ENCODE measurements at regions of chr3 and their contacts with region 1.

Region 1: GRCh38 chr3:186534113-186534669 is 10.0 kb downstream of the CRYGS start:
- DNase-seq: peak; percentile 76
- H3K4me3 Mint-ChIP-seq: peak overlapping the region; percentile 61
- H3K27ac Mint-ChIP-seq: peak overlapping the region; percentile 97
- H3K4me1 Mint-ChIP-seq: peaks cover 94% of the 10 kb centered on the region
- H3K27me3 Mint-ChIP-seq: no peaks in the 10 kb centered on the region

Region 2: DNA sequence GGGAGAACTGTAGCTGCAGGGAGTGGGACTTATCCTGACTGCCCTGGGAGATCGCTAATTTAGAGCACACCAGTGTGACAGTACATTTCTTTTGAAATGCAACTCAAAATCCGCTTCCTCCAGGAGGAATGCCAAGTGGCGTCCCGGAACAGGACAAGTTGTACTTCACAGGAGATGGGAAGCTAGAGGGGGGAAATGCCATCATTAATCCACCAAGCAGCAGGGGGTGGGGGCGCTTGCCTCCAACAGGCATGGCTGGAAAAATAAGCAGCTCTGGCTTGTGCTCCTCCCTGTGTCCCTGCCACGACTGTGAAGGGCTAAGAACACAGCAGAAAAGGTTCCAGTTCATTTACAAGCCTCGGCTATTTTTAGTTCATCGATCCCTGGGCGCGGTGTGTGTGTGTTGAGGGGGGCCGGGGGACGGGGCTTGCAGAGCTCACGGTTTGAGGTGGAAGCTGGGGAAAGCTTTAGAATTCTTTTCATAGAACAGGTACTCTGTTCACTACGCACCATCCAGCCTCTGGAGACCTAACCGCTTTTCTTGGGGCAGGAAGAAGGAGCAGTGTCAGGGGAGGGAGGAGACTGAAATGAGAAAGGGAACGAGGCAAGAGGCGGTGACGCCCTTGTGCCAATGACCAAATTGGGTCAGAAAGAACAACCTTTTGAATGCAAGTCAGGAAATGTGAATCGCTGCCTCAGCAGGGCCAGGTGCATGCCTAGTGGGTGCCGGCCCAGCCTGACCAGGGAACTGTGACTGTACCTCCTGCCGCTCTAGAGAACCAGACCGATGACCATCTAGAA is 120.4 kb before region 1 on chr3:
- CTCF ChIA-PET with region 1: interaction called, 3 read pairs
- intact Hi-C with region 1: loop called (anchors 1 kb)
- DNase-seq: peak; percentile 54
- H3K4me3 Mint-ChIP-seq: peak overlapping the region; percentile 56
- H3K27ac Mint-ChIP-seq: no peak overlapping the region
- H3K4me1 Mint-ChIP-seq: peaks cover 42% of the 10 kb centered on the region
- H3K27me3 Mint-ChIP-seq: peaks cover 18% of the 10 kb centered on the region

Region 3: DNA sequence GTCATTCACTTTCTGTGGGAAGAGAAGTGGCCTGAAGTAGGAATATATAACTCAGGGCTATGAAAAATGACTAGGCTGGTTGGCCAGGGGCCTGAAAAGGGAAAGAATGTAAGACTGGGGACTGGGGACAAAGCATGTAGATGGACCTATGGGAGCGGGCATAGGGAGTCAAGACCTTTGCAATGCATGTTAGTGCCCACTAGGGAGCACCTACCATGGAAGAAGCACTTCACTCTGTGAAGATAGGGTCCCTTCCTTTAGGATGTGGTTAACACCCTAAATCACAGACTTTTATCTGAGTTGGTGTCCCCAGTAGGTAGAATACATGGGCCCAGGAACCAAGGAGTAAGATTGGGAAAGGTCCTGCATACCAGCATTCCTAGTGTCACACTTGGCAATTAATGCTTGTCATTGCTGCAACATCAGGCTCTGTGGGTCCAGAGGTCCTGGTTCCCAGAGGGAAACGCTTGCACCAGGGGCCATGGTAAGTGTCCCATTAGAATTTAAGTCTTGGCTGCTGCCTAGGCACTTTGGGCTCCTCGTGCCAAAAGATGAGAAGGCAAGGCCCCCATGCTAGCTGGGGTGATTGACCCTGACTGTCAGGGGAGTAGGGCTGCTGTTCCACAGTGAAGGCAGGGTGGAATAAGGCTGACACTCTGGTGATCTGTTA is 69.6 kb before region 1 on chr3:
- CTCF ChIA-PET with region 1: interaction called, 4 read pairs
- intact Hi-C with region 1: loop called (anchors 2 kb)
- DNase-seq: no peak
- H3K4me3 Mint-ChIP-seq: no peak overlapping the region
- H3K27ac Mint-ChIP-seq: no peak overlapping the region
- H3K4me1 Mint-ChIP-seq: no peaks in the 10 kb centered on the region
- H3K27me3 Mint-ChIP-seq: no peaks in the 10 kb centered on the region

Region 4: GRCh38 chr3:186476044-186476468 is 58.1 kb before region 1 on chr3:
- CTCF ChIA-PET with region 1: interaction called, 3 read pairs
- intact Hi-C with region 1: loop called (anchors 5 kb)
- DNase-seq: peak; percentile 48
- H3K4me3 Mint-ChIP-seq: no peak overlapping the region
- H3K27ac Mint-ChIP-seq: peak overlapping the region; percentile 79
- H3K4me1 Mint-ChIP-seq: peaks cover 8% of the 10 kb centered on the region
- H3K27me3 Mint-ChIP-seq: no peaks in the 10 kb centered on the region

Region 5: DNA sequence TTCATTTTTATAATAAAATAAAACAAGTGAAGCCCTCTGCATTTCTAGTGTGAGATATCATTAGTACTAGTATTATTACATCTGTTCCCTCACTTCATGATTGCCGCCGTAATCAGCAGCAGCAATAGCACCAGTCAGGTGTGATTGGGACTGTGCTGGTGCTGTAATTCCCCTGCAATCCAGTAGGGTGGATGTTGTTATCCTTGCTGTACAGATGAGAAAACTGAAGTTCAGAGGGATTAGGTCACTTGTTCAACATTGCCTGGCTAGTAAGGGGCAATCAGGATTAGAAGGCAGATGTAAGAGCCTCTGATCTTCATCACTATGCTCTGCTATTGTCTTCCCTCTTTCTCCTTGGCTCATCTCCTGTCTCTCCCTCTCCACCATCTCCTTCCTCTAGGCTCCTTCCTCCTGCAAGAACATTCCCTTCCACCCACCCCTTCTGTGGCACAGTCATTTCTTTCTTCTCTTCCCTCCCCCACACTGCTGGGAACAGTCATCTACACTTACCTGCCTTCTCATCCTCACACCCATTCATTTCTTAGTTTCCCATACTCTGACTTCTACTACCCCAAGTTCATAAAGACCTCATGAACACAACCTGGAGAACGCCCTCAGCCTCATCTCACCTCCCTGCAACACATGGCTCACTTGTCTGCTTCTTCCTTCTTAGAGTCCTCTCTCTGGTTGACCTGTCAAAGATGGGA is 19.7 kb before region 1 on chr3:
- CTCF ChIA-PET with region 1: interaction called, 50 read pairs
- intact Hi-C with region 1: loop called (anchors 1 kb)
- DNase-seq: peak; percentile 71
- H3K4me3 Mint-ChIP-seq: no peak overlapping the region
- H3K27ac Mint-ChIP-seq: peak overlapping the region; percentile 78
- H3K4me1 Mint-ChIP-seq: peaks cover 79% of the 10 kb centered on the region
- H3K27me3 Mint-ChIP-seq: no peaks in the 10 kb centered on the region

Region 6: DNA sequence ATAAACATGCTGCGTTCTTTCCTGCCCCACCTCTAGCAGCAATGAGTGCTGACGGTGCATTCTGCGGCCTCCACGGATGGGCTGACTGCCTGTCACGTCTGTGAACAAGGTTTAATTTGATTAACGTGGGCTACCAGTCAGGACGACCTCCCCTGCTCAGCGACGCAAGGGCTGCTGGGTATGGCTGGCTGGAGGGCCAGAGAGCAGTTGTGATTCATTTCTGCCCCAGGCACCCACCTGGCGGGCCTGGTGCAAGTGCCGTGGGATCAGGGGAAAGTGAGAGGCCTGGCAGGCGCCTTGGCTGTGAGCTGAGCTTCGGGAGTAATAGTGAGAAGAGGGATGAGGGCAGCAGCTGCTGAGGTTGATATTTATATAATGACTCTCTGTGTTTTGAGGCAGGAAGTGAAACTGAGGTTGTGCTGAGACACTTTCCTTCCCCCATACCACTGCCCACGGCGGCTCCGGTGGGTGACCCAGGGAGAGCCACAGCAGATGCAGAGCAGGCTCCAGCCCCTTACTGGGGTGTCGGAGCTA is 1401.5 kb after region 1 on chr3:
- CTCF ChIA-PET with region 1: no interaction called
- intact Hi-C with region 1: no loop called
- DNase-seq: peak; percentile 47
- H3K4me3 Mint-ChIP-seq: no peak overlapping the region
- H3K27ac Mint-ChIP-seq: no peak overlapping the region
- H3K4me1 Mint-ChIP-seq: peaks cover 14% of the 10 kb centered on the region
- H3K27me3 Mint-ChIP-seq: no peaks in the 10 kb centered on the region